GM13976 (cell line): ENCODE measurements at regions of chr12 and their contacts with region 1.

Region 1: DNA sequence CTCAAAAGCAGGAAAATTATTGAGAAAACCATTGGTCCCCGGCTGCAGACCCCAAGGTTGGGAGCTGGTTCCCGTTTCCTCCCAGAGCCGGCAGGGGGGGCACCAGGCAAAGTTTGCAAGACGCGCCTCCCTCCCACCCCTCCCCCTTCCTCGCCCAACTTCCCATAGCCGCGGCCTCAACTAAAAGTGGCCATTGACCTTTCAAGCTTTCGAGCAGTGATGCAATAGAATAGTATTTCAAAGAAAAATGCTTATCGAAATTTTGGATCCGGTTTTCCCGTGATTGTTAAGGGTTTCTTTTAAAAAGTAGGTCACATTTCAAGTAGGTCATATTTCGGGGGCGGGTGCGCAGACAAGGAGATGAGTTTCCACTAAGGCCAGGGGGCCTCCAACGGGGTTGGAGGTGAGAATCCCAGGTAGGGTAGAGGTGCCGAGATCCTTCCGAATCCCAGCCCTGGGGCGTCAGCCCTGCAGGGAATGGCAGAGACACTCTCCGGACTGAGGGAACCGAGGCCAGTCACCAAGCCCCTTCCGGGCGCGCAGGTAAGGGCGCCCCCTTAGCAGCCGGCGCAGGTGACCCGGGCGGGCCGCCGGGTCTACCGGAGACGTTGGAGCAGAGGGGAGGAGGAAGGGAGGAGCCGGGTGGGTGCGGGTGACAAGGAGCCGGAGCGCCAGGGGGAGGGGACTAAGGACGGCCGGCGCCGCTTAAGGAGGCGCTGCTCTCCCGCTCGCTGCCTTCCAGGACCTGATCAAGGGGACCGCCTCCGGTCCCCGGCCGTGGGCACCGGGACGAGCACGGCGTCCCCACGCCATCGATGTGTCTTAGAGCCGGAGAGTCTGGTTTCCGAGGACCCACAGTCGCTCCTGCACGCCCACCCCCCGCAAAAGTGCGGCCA is 2.6 kb upstream of the SOCS2 start:
- DNase-seq: peak; percentile 87
- CTCF ChIP-seq: peak; percentile 77

Region 2: DNA sequence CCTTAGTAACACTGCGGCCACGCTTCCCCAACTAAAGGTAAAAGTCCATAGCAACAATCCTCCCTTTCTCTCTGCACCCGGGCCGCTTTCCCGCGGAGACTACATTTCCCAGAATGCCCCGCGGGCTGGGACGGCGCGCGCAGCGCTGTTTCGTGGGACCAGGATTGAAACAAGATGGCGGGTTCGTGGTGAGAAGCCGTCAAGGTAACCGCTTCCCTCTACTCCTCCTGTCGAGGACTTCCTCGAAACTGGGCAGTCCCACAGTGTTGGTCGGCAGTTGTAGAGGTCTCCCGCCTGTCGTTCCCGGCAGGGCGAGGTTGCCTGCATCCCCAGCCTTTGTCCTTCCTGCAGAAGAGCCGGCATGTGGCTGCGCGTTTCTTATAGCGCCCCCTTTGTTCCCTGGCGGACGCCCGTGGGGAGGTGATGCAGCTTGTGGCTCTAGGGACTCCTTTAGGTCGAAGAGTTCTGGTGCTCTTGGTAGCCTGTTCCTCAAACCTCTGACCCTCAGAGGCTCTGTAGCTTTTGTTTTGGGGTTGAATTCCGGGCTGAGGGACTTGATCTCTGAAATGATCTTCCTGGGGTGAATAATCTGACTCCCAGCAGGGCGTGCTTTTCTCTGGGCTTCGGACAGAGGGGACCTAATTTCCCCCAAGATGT is 102.4 kb before region 1 on chr12 and contains the start of gene MRPL42:
- in situ Hi-C with region 1: no loop called
- DNase-seq: peak; percentile 84
- CTCF ChIP-seq: peak; percentile 81

Region 3: DNA sequence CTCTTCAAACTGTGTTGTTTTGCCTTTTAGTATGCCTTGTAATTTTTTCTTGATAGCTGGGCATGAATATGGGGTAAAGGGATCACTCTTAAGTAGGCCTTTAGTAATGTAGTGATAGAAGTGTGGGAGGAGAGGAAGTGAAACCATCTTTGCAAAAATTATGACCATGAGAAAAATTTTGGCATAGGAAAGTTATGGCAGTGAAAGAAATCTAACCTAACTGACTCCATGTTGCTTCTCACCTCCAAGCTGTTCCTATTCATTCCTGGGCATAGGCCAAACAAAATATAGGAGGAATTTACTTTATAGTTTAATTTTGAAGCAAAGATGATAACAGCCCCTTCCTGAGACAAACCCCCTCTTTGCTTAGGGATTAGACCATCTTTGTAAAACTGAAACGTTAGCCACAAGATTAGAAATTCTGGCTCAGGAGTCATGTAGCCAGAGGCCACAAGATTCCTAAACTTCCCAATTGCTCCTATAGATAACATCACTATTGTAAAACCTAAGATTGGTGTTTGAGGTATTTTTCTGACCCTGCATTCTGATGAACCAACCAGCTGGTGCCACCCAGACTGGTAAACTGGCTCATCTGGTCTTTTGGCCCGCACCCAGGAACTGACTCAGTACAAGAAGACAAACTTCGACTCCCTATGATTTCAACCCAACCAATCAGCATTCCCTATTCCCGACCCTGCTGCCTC is 153.1 kb after region 1 on chr12:
- in situ Hi-C with region 1: no loop called
- DNase-seq: no peak
- CTCF ChIP-seq: no peak

Region 4: DNA sequence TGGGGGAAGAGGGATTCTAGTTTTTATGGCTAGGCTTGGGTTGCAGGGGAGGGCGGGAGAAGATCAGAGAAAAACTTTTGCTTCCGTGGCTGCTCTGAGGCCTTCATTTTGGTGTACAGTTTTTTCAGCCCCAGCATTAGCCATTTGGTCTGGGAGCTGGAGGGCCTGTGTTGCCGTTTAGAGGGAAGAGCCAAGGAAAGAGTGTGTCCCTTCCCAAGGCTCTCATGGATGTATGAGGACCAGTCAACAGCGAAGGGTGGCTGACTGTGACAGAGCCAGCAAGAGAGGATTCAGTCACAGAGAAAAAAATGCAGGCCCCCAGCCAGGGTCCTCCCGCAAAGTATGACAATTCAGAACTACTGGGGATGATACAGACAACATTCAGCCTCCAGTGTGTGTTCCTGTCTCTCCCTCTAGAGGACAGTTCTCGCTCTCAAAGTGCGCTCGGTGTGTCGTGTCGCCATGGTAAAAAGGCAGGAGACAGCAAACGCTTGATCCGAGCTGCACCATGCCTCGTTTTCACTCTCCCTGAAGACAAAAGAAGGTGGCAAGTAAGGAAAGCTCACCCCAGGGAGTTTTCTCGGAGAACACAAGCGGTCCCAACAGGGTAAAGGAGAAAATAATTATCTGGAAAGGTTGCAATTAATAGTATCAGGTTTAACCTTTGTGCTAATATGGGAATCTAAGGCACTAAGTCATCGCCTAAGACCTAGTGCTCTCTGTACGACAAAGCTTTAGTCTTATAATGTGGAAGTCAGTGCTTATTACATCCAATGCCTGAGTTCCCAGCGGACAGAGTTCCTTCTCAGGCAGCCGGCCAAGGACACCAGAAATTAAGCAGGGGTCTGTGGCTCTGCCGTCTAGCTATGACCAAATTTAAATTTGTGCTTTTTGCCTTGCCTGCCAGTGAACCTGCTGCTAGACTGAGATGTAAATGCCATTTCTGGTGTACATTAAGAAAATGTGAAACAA is 421.2 kb after region 1 on chr12:
- in situ Hi-C with region 1: loop called (anchors 25 kb)
- DNase-seq: no peak
- CTCF ChIP-seq: no peak

Region 5: DNA sequence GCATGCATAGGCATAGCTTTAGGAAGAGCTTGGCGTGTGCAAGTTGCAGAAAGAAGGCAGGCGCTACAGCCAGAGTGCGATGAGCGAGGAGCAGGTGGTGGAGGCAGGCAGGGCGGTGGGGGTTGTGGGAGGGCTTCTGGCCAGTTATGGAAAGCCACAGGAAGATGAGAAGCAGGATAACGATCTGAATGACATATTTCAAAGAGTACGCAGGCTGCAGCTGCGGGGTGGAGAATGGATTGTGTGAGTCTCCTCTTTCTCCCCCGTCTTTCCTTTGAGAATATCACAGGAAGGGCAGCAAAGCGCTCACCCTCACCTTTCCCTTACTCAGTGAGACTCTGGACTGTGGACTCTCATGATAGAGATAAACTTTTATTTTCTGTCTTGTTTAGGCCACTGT is 529.7 kb after region 1 on chr12:
- in situ Hi-C with region 1: loop called (anchors 10 kb)
- DNase-seq: no peak
- CTCF ChIP-seq: no peak

Region 6: DNA sequence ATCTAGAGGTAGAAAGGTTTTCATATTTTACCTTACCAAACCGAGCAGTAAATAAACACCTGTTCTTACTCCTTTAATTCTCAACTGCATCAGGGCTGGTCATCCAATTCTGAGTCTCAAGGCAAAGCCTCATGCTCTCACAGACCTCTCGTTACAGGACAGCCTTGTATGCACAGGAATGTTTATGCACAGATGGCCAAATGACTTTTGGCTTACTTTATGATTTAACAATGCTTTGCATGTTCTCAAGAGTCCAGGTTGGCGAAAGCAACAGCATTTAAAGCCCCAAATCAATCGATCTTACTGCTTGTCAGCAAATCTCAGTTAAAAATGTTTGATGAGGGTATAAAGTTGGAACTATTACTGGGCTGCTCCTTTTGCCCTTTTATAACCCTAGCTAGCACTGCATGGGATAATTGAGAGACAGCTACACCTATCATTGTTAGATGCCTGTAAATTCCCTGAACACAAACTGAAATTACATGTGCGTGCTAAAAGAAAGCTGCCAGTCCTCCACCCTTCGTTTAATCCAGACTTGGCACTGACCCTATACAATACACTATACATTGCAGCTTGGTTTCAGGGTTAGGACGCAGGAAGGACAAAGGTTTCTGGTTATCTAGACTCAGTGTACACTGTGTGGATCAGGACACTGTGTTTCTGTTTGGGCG is 1016.8 kb after region 1 on chr12:
- in situ Hi-C with region 1: no loop called
- DNase-seq: no peak
- CTCF ChIP-seq: no peak